Endothelial cell of umbilical vein (primary cell): ENCODE measurements at regions of chr15 and their contacts with region 1.

Region 1: GRCh38 chr15:80567721-80568157 is 127.4 kb upstream of the ABHD17C start:
- DNase-seq: peak; percentile 88
- H3K4me3 ChIP-seq: no peak overlapping the region
- H3K27ac ChIP-seq: no peak overlapping the region
- H3K4me1 ChIP-seq: peaks cover 3% of the 10 kb centered on the region
- H3K27me3 ChIP-seq: peaks cover 0 to 4% of the 10 kb centered on the region in 2 experiments
- CTCF ChIP-seq: peak; percentile 77 to 78
- POLR2A ChIP-seq: no peak

Region 2: GRCh38 chr15:80455668-80456442 is 111.9 kb before region 1 on chr15:
- CTCF ChIA-PET with region 1: interaction called, 9 read pairs
- POLR2A ChIA-PET with region 1: no interaction called
- dilution Hi-C with region 1: no loop called
- intact Hi-C with region 1: loop called (anchors 1 kb)
- DNase-seq: peak; percentile 63
- H3K4me3 ChIP-seq: no peak overlapping the region
- H3K27ac ChIP-seq: no peak overlapping the region
- H3K4me1 ChIP-seq: no peaks in the 10 kb centered on the region
- H3K27me3 ChIP-seq: peaks cover 1 to 3% of the 10 kb centered on the region in 2 experiments
- CTCF ChIP-seq: peak; percentile 85 to 94
- POLR2A ChIP-seq: no peak

Region 3: DNA sequence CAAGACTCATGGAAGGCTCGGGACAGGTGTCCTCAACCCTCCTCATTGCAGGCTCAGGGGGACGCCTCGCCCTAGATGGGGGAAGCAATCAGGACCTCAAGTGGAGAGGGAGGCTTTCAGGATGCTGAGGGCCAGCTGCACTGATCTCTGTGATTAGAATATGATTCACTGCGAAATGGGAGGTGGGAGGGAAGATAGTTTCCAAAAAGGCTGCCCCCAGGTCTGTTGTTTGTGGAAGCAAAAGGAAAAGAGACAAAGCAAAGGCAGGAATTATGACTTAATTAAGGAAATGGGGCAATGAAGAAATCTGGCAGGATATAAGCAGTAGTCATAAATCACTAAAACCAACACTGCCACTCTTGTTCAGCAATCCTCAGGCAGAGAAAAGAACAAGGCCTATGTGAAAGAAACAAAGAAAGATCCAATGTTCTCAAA is 41.8 kb after region 1 on chr15:
- CTCF ChIA-PET with region 1: interaction called, 24 read pairs
- POLR2A ChIA-PET with region 1: no interaction called
- dilution Hi-C with region 1: no loop called
- intact Hi-C with region 1: no loop called
- DNase-seq: peak; percentile 87
- H3K4me3 ChIP-seq: no peak overlapping the region
- H3K27ac ChIP-seq: no peak overlapping the region
- H3K4me1 ChIP-seq: peaks cover 21% of the 10 kb centered on the region
- H3K27me3 ChIP-seq: no peaks in the 10 kb centered on the region
- CTCF ChIP-seq: no peak
- POLR2A ChIP-seq: no peak

Region 4: GRCh38 chr15:80674245-80674614 is 106.5 kb after region 1 on chr15:
- CTCF ChIA-PET with region 1: interaction called, 26 read pairs
- POLR2A ChIA-PET with region 1: no interaction called
- dilution Hi-C with region 1: no loop called
- intact Hi-C with region 1: no loop called
- DNase-seq: no peak
- H3K4me3 ChIP-seq: no peak overlapping the region
- H3K27ac ChIP-seq: no peak overlapping the region
- H3K4me1 ChIP-seq: no peaks in the 10 kb centered on the region
- H3K27me3 ChIP-seq: peaks cover under 1 to 2% of the 10 kb centered on the region in 2 experiments
- CTCF ChIP-seq: no peak
- POLR2A ChIP-seq: no peak

Region 5: DNA sequence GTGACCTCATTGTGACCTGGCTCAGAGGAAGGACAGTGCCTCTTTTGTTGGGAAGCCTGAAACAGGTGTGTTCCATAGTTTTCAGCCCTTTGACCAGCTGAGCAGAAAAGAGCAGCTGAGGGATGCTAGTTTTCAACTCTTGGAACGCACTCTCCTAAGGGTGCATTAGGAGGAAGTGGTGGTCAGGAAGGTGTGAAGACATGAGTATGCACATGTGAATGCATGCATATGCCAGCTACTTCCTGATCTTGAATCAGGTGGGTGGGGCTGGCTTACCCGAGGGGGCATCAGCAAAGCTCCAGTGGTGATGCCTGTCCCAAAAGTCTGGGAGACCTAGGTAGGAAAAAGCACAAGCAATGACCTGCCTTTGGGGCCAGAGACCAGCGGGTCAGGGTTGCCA is 188.1 kb after region 1 on chr15:
- CTCF ChIA-PET with region 1: interaction called, 17 read pairs
- POLR2A ChIA-PET with region 1: no interaction called
- dilution Hi-C with region 1: no loop called
- intact Hi-C with region 1: no loop called
- DNase-seq: no peak
- H3K4me3 ChIP-seq: no peak overlapping the region
- H3K27ac ChIP-seq: no peak overlapping the region
- H3K4me1 ChIP-seq: peaks cover 7% of the 10 kb centered on the region
- H3K27me3 ChIP-seq: no peaks in the 10 kb centered on the region
- CTCF ChIP-seq: no peak
- POLR2A ChIP-seq: no peak

Region 6: GRCh38 chr15:80970018-80970658 is 402.4 kb after region 1 on chr15:
- CTCF ChIA-PET with region 1: interaction called, 87 read pairs
- POLR2A ChIA-PET with region 1: no interaction called
- dilution Hi-C with region 1: no loop called
- intact Hi-C with region 1: loop called (anchors 1 kb)
- DNase-seq: peak; percentile 64
- H3K4me3 ChIP-seq: no peak overlapping the region
- H3K27ac ChIP-seq: no peak overlapping the region
- H3K4me1 ChIP-seq: no peaks in the 10 kb centered on the region
- H3K27me3 ChIP-seq: no peaks in the 10 kb centered on the region
- CTCF ChIP-seq: peak; percentile 59 to 61
- POLR2A ChIP-seq: no peak